Right cardiac atrium (tissue), 5 donors: ENCODE measurements at regions of chr4 and their contacts with region 1.

Region 1: GRCh38 chr4:123121241-123121907 is 199.0 kb upstream of the NUDT6 start:
- DNase-seq: no peak
- ATAC-seq: no peak
- H3K4me3 ChIP-seq: no peak overlapping the region
- H3K27ac ChIP-seq: no peak overlapping the region
- H3K4me1 ChIP-seq: no peaks in the 10 kb centered on the region
- H3K27me3 ChIP-seq: no peaks in the 10 kb centered on the region

Region 2: GRCh38 chr4:123649645-123650391 is 528.4 kb after region 1 on chr4:
- intact Hi-C with region 1: loop called in 1 of 4 experiments (anchors 10 kb)
- DNase-seq: peak; percentile 28 to 61 (median 61)
- ATAC-seq: peak; percentile 76 to 78
- H3K4me3 ChIP-seq: peak overlapping the region; percentile 45
- H3K27ac ChIP-seq: peak overlapping the region; percentile 88
- H3K4me1 ChIP-seq: peaks cover 4% of the 10 kb centered on the region
- H3K27me3 ChIP-seq: no peaks in the 10 kb centered on the region

Region 3: DNA sequence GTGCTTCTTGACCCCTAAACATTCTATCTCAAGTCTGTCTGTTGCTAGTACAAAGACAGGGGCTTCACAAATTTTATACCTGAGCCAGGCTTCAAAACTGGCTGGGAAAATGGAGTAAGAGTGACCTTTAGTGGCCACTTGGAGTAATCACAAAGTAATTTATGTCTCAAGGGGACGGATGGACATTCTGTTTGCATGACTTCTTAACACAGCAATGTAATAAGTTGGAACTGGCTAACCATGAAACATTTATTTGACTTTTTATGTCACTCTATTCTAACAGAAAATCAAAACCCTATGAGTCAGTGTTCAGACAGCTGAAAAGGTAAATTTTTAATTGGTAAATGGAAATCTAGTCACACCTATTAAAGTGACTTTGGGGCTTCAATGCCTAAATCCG is 990.5 kb after region 1 on chr4:
- intact Hi-C with region 1: loop called in 1 of 4 experiments (anchors 5 kb)
- DNase-seq: no peak
- ATAC-seq: peak; percentile 84 to 86
- H3K4me3 ChIP-seq: no peak overlapping the region
- H3K27ac ChIP-seq: no peak overlapping the region
- H3K4me1 ChIP-seq: no peaks in the 10 kb centered on the region
- H3K27me3 ChIP-seq: no peaks in the 10 kb centered on the region